ENCODE measurements at regions of chr7 and their contacts with region 1.

Region 1: DNA sequence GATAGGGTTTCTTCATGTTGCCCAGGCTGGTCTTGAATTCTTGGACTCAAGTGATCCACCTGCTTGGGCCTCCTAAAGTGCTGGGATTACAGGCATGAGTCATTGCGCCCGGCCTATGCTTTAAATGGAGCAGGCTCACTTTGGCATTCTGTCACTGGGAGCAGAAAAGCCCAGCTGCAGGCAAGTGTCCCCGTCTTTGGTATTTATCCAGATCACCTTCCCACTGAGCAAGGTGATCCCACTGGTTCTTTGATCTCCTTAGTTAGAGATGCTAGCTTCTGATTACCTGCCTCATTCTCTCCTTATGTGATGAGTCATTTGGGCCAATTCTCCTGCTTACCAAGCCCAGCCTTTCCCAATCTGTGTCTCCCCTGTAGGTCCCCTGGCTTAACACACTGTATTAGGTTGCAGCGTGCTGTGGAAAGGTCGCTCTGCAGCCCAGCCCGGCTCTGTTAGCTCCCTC is 39.3 kb downstream of the SPDYE5 start:
- DNase-seq: no peak
- H3K4me3 Mint-ChIP-seq: no peak overlapping the region
- H3K27ac Mint-ChIP-seq: no peak overlapping the region
- H3K4me1 Mint-ChIP-seq: peaks cover 20% of the 10 kb centered on the region
- H3K27me3 Mint-ChIP-seq: peaks cover 5% of the 10 kb centered on the region

Region 2: GRCh38 chr7:75072978-75073282 is 458.5 kb before region 1 on chr7:
- intact Hi-C with region 1: loop called (anchors 5 kb)
- DNase-seq: no peak
- H3K4me3 Mint-ChIP-seq: peak overlapping the region; percentile 99
- H3K27ac Mint-ChIP-seq: peak overlapping the region; percentile 97
- H3K4me1 Mint-ChIP-seq: peaks cover 5% of the 10 kb centered on the region
- H3K27me3 Mint-ChIP-seq: no peaks in the 10 kb centered on the region

Region 3: DNA sequence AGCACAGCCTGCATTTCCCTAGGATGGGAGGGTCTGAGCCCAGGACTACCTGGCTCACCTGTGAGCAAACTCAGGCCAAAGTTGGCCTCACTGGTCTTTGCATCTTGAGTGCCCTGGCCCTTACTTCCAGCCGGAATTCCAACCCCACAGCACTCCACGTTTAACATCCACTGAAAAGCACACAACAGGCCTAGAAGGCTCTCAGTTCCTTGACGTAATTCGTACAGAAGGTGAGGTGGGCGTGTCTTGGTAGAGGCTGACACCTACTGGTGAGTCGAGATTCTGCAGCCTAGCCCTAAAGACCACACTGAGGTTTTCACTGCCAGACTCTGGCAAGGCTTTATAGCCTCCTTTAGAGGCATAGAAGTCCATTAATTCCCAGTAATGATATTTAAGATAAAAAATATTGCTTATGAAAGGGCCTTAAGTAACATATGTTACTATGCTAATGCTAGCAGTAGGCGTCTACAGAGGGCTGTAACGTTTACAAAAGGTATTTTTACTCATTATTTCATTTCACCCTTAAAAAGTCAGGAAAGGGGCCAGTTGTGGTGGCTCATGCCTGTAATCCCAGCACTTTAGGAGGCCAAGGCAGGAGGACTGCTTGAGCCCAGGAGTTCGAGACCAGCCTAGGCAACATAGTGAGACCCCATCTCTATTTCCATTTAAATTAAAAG is 111.6 kb after region 1 on chr7:
- intact Hi-C with region 1: loop called (anchors 1 kb)
- DNase-seq: peak; percentile 48
- H3K4me3 Mint-ChIP-seq: no peak overlapping the region
- H3K27ac Mint-ChIP-seq: no peak overlapping the region
- H3K4me1 Mint-ChIP-seq: peaks cover 10% of the 10 kb centered on the region
- H3K27me3 Mint-ChIP-seq: peaks cover 18% of the 10 kb centered on the region

Region 4: GRCh38 chr7:76166404-76167255 is 635.2 kb after region 1 on chr7:
- intact Hi-C with region 1: loop called (anchors 1 kb)
- DNase-seq: peak; percentile 93
- H3K4me3 Mint-ChIP-seq: peak overlapping the region; percentile 85
- H3K27ac Mint-ChIP-seq: peak overlapping the region; percentile 85
- H3K4me1 Mint-ChIP-seq: peaks cover 10% of the 10 kb centered on the region
- H3K27me3 Mint-ChIP-seq: peaks cover 2% of the 10 kb centered on the region

Measured in activated T-helper 1 cell treated with anti-CD3 and anti-CD28 coated beads, Interleukin-12 subunit alpha, Interleukin-12 subunit beta, Interleukin-2, Interleukin-4 antibody, amounts not matched to agents 30 ng/mL and 10 ng/mL and 1 ng/mL, durations not matched to agents 14 hours and 24 hours and 36 hours (primary cell).